ENCODE measurements at regions of chr3 and their contacts with region 1.

Region 1: GRCh38 chr3:108914774-108915641 is 38.7 kb downstream of the GUCA1C start:
- ATAC-seq: peak; percentile 79 to 97 (median 85)
- H3K4me3 ChIP-seq: no peak overlapping the region
- H3K27ac ChIP-seq: no peak overlapping the region
- H3K4me1 ChIP-seq: no peaks in the 10 kb centered on the region

Region 2: GRCh38 chr3:108477511-108478147 is 437.4 kb before region 1 on chr3:
- in situ Hi-C with region 1: loop called in 1 of 9 experiments (anchors 25 kb)
- ATAC-seq: peak in 4 of 8 experiments; percentile 40 to 79 (median 70)
- H3K4me3 ChIP-seq: no peak overlapping the region
- H3K27ac ChIP-seq: no peak overlapping the region
- H3K4me1 ChIP-seq: peaks cover 0 to 2% of the 10 kb centered on the region in 2 donors

Region 3: GRCh38 chr3:108662130-108662738 is 252.8 kb before region 1 on chr3:
- in situ Hi-C with region 1: loop called in 5 of 9 experiments (anchors 10 to 25 kb)
- ATAC-seq: peak; percentile 42 to 78 (median 67)
- H3K4me3 ChIP-seq: no peak overlapping the region
- H3K27ac ChIP-seq: no peak overlapping the region
- H3K4me1 ChIP-seq: no peaks in the 10 kb centered on the region

Measured in motor neuron (in vitro differentiated cells).